ENCODE measurements at regions of chr3 and their contacts with region 1.

Region 1: DNA sequence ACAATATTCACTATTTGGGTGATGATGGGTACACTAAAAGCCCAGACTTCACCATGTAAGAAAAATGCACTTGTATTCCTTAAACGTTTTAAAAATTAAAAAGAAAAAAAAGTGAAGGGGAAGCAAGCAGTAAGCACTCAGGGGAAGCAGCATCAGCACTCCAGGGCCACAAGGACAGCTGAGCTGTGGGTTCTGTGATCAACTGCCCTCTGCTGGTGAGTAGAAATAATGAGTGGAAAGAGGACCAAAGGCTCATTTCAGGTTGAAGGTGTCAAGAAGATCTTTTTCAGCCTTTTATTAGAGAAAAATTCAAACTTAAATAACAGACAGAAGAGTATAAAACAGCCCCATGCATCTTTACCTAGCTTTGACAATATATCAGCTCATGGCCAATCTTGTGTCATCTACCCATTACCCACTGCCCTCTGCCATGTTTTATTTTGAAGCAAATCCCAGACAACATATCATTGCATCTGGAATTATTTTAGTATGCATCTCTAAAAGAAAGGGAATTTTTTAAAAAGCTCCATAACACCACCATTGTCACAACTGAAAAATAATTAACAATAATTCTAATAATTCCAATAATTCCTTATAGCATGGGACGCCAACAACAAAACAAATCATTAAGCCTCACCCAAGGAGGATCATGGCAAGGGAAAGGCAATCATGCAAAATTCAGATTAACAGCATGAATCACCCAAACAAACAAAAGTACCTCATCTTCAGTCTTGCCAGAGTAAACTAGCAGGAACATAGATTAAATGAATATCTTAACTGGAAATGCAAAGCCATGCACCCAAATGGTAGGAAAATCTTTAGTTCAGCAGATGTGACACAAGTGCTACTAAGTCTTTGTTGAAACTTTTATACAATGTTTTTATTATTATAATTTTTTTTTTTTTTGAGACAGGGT is 42.5 kb downstream of the TAMM41 start:
- DNase-seq: no peak
- ATAC-seq: peak; percentile 94
- H3K4me3 ChIP-seq: no peak overlapping the region
- H3K27ac ChIP-seq: no peak overlapping the region
- H3K4me1 ChIP-seq: no peaks in the 10 kb centered on the region
- H3K27me3 ChIP-seq: no peaks in the 10 kb centered on the region
- CTCF ChIP-seq: peak; percentile 59 to 73 (median 69)
- EP300 ChIP-seq: no peak
- POLR2A ChIP-seq: no peak
- RAD21 ChIP-seq: peak; percentile 61

Region 2: DNA sequence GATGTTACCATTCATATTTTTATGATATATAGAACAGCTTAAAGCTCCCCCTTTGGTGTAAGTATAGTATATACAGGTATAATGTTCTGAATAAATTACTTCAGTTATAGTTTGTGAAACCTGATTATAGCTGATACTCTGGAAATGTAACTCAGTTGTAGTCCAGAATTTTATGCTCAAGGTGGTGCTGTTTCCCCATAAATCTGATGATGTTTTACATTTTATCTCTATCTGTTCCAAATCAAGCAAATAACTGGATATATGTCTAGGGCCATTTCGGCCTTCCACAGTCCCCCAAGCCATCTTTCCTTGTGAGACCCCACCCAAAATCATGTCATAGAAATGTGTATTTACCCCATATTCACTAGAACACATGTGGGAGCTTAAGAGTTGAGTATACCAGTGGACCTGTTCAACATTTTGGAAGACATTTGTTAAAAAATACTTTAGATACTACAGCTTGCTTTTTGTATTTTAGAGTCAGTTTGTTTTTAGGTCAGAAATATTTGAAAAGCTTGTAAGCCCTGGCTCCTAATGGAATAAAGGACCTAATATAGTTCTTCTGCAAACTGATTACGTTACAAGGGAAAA is 424.9 kb before region 1 on chr3:
- CTCF ChIA-PET with region 1: interaction called, 14 read pairs
- POLR2A ChIA-PET with region 1: no interaction called
- RAD21 ChIA-PET with region 1: interaction called, 7 read pairs
- SMC1A ChIA-PET with region 1: interaction called, 3 read pairs
- in situ Hi-C with region 1: loop called (anchors 10 kb)
- intact Hi-C with region 1: loop called (anchors 5 kb)
- DNase-seq: peak; percentile 13
- ATAC-seq: peak; percentile 49; the same call in 2 of the 3 replicates
- H3K4me3 ChIP-seq: no peak overlapping the region
- H3K27ac ChIP-seq: no peak overlapping the region
- H3K4me1 ChIP-seq: no peaks in the 10 kb centered on the region
- H3K27me3 ChIP-seq: no peaks in the 10 kb centered on the region
- CTCF ChIP-seq: peak; percentile 22 to 60 (median 44); a peak in 4 of 6 replicates
- EP300 ChIP-seq: no peak
- POLR2A ChIP-seq: no peak
- RAD21 ChIP-seq: peak; percentile 69

Region 3: DNA sequence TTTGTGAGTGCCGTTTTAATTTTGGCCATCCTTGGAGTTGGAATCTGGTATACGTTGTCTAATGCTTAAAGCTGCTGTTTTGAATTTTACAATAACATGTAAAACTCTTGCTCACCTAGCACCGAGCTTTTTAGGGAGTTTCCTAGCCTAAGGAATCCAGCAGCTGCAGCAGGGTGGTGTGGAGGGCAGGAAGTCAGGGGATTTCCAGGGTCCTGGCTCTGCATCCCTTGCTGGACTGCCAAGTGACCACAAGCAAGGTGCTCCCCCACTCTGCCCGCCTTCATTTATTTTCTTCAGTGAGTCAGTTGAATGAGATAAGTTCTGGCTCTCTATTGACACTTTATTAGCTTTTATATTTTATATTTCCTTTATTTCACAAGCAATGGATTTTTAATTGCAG is 418.3 kb before region 1 on chr3:
- CTCF ChIA-PET with region 1: interaction called, 3 read pairs
- POLR2A ChIA-PET with region 1: no interaction called
- RAD21 ChIA-PET with region 1: no interaction called
- SMC1A ChIA-PET with region 1: interaction called, 3 read pairs
- in situ Hi-C with region 1: loop called (anchors 10 kb)
- intact Hi-C with region 1: no loop called
- DNase-seq: no peak
- ATAC-seq: no peak
- H3K4me3 ChIP-seq: no peak overlapping the region
- H3K27ac ChIP-seq: no peak overlapping the region
- H3K4me1 ChIP-seq: no peaks in the 10 kb centered on the region; the same call in 1 of the 2 replicates
- H3K27me3 ChIP-seq: no peaks in the 10 kb centered on the region
- CTCF ChIP-seq: no peak
- EP300 ChIP-seq: no peak
- POLR2A ChIP-seq: no peak
- RAD21 ChIP-seq: no peak

Region 4: GRCh38 chr3:11815111-11815510 is 10.9 kb after region 1 on chr3:
- CTCF ChIA-PET with region 1: interaction called, 20 read pairs
- POLR2A ChIA-PET with region 1: no interaction called
- RAD21 ChIA-PET with region 1: no interaction called
- SMC1A ChIA-PET with region 1: interaction called, 3 read pairs
- in situ Hi-C with region 1: no loop called
- intact Hi-C with region 1: no loop called
- DNase-seq: no peak
- ATAC-seq: no peak
- H3K4me3 ChIP-seq: no peak overlapping the region
- H3K27ac ChIP-seq: no peak overlapping the region
- H3K4me1 ChIP-seq: no peaks in the 10 kb centered on the region
- H3K27me3 ChIP-seq: no peaks in the 10 kb centered on the region
- CTCF ChIP-seq: no peak
- EP300 ChIP-seq: no peak
- POLR2A ChIP-seq: no peak
- RAD21 ChIP-seq: no peak

Measured in GM12878 (cell line).